AG04450 (cell line): ENCODE measurements at regions of chr1 and their contacts with region 1.

Region 1: DNA sequence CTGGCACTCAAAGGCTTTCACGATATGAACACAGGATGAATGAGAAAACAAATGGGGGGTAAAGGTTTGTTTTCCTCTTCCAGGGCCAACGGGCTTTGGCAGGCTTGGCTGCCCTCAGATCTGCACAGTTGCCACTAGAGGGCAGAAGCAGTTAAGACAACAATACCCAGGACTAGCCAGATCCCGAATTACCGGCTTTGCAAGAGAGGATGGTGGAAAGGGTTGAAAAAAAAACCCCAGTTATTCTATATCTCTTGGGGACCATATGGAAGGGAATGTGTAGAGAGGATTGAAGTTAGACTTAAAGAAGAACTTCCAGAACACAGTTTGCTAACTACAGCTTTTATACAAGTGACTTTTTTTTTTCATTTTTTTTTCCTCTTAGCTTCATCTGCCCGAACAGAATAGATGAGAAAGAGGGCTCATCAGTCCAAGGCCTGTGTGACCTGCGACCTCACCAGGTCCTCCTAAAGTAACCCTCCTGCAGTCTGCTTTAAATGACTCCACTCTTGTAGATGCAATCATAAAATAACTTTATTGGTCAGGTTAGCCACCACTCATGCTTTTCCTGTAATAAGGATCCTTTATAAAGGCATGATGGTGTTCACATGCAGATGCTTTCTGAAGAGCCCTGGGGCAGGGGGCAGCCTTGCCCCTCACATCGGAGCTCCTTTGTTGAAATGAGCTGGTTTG is 10.7 kb downstream of the FMOD start:
- DNase-seq: peak; percentile 55
- H3K4me3 ChIP-seq: no peak overlapping the region
- H3K27ac ChIP-seq: no peak overlapping the region
- H3K27me3 ChIP-seq: peaks cover 43% of the 10 kb centered on the region
- CTCF ChIP-seq: peak; percentile 87

Region 2: GRCh38 chr1:203326830-203327683 is 13.2 kb before region 1 on chr1:
- CTCF ChIA-PET with region 1: interaction called, 20 read pairs
- POLR2A ChIA-PET with region 1: no interaction called
- DNase-seq: peak; percentile 51
- H3K4me3 ChIP-seq: peak overlapping the region; percentile 67
- H3K27ac ChIP-seq: peak overlapping the region; percentile 39
- H3K27me3 ChIP-seq: peaks cover 55% of the 10 kb centered on the region
- CTCF ChIP-seq: no peak

Region 3: GRCh38 chr1:203381151-203381751 is 41.0 kb after region 1 on chr1:
- CTCF ChIA-PET with region 1: interaction called, 18 read pairs
- POLR2A ChIA-PET with region 1: no interaction called
- DNase-seq: no peak
- H3K4me3 ChIP-seq: no peak overlapping the region
- H3K27ac ChIP-seq: no peak overlapping the region
- H3K27me3 ChIP-seq: peaks cover 45% of the 10 kb centered on the region
- CTCF ChIP-seq: no peak

Region 4: DNA sequence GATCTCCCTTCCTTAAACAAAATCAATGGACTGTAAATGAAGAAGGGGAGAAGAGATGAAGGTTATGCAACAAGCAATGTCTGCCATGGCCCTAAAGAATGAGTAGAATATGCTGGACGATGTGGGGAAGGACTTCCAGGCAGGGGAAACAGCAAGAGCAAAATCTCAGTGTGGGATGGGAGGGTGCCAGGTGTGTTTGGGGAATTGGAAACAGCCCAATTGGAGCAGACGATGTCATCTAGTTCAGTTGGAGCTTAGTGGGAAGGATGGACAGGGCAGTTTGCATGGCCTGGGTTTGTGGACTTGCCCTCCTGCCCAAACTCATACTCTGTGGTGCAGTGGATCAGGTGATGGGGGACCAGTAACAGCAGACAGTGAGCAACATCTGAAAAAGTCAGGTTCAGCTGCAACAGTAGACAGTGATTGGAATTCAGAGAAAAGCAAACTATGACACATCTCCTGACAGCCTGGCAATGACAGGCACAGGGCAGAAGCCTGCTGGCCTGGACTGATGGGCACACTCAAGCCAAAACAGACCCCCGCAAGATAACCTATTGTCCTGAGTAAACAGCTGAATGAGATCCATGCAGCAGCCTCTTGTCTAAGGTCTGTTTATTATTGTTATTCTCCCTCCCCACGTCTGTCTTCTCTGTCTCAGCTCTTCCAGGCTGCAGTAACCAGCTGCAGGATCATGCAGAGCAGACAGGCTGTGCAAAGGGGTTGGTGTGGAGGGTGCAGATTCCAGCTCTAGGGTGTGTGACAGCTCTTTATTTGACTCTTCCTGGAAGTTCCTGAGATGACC is 84.8 kb after region 1 on chr1:
- CTCF ChIA-PET with region 1: interaction called, 12 read pairs
- POLR2A ChIA-PET with region 1: no interaction called
- DNase-seq: peak; percentile 47
- H3K4me3 ChIP-seq: no peak overlapping the region
- H3K27ac ChIP-seq: peak overlapping the region; percentile 54
- H3K27me3 ChIP-seq: peaks cover 52% of the 10 kb centered on the region
- CTCF ChIP-seq: no peak

Region 5: GRCh38 chr1:203486618-203487370 is 146.5 kb after region 1 on chr1:
- CTCF ChIA-PET with region 1: interaction called, 114 read pairs
- POLR2A ChIA-PET with region 1: interaction called, 4 read pairs
- DNase-seq: no peak
- H3K4me3 ChIP-seq: no peak overlapping the region
- H3K27ac ChIP-seq: peak overlapping the region; percentile 67
- H3K27me3 ChIP-seq: peaks cover 3% of the 10 kb centered on the region
- CTCF ChIP-seq: no peak

Region 6: DNA sequence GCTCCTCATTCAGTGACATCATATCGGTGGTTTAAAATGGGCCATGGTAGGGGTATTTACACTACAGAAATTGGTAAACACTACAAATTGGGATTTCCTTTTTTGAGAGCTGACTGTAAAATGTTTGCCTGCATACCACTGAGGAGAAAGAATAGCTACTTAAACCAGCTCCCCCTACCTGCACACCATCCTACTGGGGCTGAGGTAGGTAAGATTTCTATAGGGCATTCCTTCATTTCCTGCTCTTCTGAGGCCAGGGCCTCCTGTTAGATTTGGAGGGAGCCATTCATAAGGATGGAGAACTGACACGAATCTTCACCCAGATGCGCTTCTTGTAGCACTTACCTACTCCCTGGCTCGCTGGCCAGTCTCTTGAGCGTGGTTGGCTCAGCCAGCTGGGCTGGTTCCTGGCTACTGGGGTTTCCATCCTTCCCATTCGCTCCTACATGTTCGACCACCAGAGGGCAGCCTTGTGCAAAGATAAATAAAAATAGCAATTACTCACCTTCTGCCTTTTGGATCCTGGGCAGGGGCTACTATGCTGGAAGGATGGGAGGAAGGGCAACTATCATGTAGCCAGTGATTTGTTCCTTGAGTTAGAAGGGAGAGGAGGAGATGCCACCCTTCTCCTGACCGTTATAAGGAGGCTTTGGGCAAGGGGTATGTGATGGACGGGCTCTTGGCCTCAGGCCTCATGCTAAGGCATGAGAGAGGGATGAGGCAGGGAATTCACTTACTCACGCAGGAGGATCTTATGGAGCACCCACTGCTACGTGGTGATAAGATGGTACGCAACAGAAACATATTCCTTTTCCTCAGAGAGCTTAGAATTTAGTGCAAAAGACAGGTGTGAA is 164.4 kb after region 1 on chr1:
- CTCF ChIA-PET with region 1: interaction called, 24 read pairs
- POLR2A ChIA-PET with region 1: no interaction called
- DNase-seq: peak; percentile 61
- H3K4me3 ChIP-seq: no peak overlapping the region
- H3K27ac ChIP-seq: no peak overlapping the region
- H3K27me3 ChIP-seq: no peaks in the 10 kb centered on the region
- CTCF ChIP-seq: peak; percentile 81